GM13976 (cell line): ENCODE measurements at regions of chr9 and their contacts with region 1.

Region 1: GRCh38 chr9:22452415-22453010 is 5.9 kb downstream of the DMRTA1 start:
- DNase-seq: no peak
- CTCF ChIP-seq: peak; percentile 68

Region 2: DNA sequence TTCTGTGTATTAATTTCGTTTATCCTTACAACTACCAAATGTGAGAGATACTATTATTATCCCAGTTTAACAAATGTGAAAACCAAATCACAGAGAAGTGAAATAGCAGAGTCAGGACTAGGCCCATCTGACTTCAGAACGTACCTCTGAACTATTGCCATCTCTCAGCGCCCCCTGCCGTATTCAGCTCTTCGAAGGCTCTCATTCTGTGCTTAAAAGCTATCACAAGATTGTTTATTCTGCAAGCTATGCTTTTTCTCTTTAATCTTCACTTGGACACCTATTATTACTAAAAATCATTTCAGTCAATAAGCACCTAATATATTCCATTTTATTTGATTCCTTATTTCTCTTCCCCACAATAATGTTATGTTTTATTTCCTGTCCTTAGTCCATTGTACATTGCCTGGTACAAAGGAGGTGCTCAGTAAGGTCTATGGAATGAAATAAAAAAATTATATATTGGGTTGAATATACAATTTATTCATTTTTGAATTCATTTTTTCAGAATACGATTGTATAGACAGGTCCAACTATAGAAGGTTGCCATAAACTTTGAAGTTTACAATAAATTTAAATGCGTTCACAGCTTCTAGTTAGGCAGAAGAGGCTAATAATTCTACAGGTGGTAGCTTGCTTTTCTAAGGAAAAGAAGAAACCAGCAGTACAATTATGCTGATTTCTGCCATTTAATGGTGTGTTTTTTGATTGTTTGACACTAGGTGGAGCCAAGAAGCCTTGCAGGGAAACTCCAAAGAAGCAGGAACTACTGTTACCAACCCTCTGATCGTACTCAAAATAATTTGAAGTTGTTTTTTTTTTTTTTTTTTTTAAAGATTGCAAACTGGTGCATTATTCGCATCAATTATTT is 208.1 kb before region 1 on chr9:
- in situ Hi-C with region 1: loop called (anchors 10 kb)
- DNase-seq: peak; percentile 32
- CTCF ChIP-seq: peak; percentile 58